ENCODE measurements at regions of chr9 and their contacts with region 1.

Region 1: GRCh38 chr9:75088260-75088905 is at the start of gene OSTF1:
- DNase-seq: peak; percentile 82 to 97
- H3K4me3 ChIP-seq: peak within 1 kb of the TSS; percentile 97 to 99
- H3K27ac ChIP-seq: peak within 1 kb of the TSS; percentile 92 to 96
- H3K4me1 ChIP-seq: peaks cover 6 to 22% of the 10 kb centered on the region in 2 donors
- H3K27me3 ChIP-seq: no peaks in the 10 kb centered on the region
- CTCF ChIP-seq: peak in 1 of 3 experiments; percentile 6
- total RNA-seq, gene OSTF1: 25.1 TPM

Region 2: GRCh38 chr9:74952281-74953151 is 135.9 kb before region 1 on chr9 and contains the start of gene C9orf40:
- intact Hi-C with region 1: loop called (anchors 2 kb)
- DNase-seq: peak; percentile 18 to 93
- H3K4me3 ChIP-seq: peak within 1 kb of the TSS; percentile 80 to 89
- H3K27ac ChIP-seq: peak within 1 kb of the TSS; percentile 97 to 98
- H3K4me1 ChIP-seq: no peaks in the 10 kb centered on the region
- H3K27me3 ChIP-seq: no peaks in the 10 kb centered on the region
- CTCF ChIP-seq: peak; percentile 74 to 88 (median 78)
- total RNA-seq, gene C9orf40: 15.2 TPM

Region 3: GRCh38 chr9:75027187-75028107 is 60.9 kb before region 1 on chr9:
- intact Hi-C with region 1: loop called (anchors 1 kb)
- DNase-seq: peak in 1 of 2 donors; percentile 80
- H3K4me3 ChIP-seq: peak overlapping the region; percentile 78 to 98
- H3K27ac ChIP-seq: peak overlapping the region; percentile 84 to 88
- H3K4me1 ChIP-seq: peaks cover 2 to 11% of the 10 kb centered on the region in 2 donors
- H3K27me3 ChIP-seq: no peaks in the 10 kb centered on the region
- CTCF ChIP-seq: no peak

Region 4: DNA sequence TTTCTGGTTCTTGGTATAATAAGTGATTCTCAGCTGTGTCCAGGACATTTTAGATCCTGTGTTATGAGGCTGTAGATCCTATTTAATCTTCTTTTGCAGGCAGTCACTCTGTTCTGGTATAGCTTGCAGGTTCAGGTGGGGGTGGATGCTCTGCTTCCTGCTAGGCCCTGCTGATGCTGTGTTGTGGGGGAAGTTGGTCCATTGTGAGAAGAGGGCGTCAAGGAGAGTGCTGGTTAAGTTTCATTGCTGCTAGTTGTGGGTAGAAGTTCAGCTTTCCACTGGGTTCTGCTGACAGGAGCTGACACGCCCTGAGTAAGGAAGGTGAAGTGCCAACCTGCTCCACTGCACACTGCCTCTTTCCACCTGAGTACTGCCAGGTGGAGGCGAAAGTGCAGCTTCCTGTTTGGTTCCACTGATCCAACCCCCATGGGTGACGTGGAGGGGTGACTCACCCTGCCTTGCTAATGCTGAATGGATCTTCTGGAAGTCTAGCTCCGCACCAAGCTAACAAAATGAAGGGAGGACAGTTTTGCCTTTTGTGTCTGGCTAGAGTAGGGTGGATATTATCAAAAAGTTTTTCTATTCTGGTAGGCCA is 16.8 kb before region 1 on chr9:
- intact Hi-C with region 1: no loop called
- DNase-seq: no peak
- H3K4me3 ChIP-seq: no peak overlapping the region
- H3K27ac ChIP-seq: no peak overlapping the region
- H3K4me1 ChIP-seq: no peaks in the 10 kb centered on the region
- H3K27me3 ChIP-seq: no peaks in the 10 kb centered on the region
- CTCF ChIP-seq: no peak

Measured in ascending aorta (tissue), 2 donors.